ENCODE measurements at regions of chrX and their contacts with region 1.

Region 1: GRCh38 chrX:43836435-43837184 is 45.6 kb downstream of the MAOB start:
- DNase-seq: no peak
- H3K4me3 ChIP-seq: no peak overlapping the region
- H3K27ac ChIP-seq: no peak overlapping the region
- H3K4me1 ChIP-seq: peaks cover 0 to 9% (median 5%) of the 10 kb centered on the region in 4 donors
- H3K27me3 ChIP-seq: no peaks in the 10 kb centered on the region
- CTCF ChIP-seq: peak; percentile 66 to 77 (median 73)
- EP300 ChIP-seq: no peak
- POLR2A ChIP-seq: no peak

Region 2: GRCh38 chrX:43939187-43939926 is 102.7 kb after region 1 on chrX:
- intact Hi-C with region 1: loop called (anchors 5 kb)
- DNase-seq: no peak
- H3K4me3 ChIP-seq: no peak overlapping the region
- H3K27ac ChIP-seq: no peak overlapping the region
- H3K4me1 ChIP-seq: no peaks in the 10 kb centered on the region
- H3K27me3 ChIP-seq: no peaks in the 10 kb centered on the region
- CTCF ChIP-seq: peak; percentile 25 to 29 (median 28)
- EP300 ChIP-seq: no peak
- POLR2A ChIP-seq: no peak

Measured in esophagus muscularis mucosa (tissue), 4 donors.